Activated CD4-positive, alpha-beta memory T cell treated with anti-CD3 and anti-CD28 coated beads, Interleukin-2, amount 10 ng/mL, durations not matched to agents 7 days and 5 days (primary cell): ENCODE measurements at regions of chr1 and their contacts with region 1.

Region 1: GRCh38 chr1:207797229-207797961 is 45.5 kb downstream of the CD46 start:
- DNase-seq: peak; percentile 81
- H3K4me3 Mint-ChIP-seq: no peak overlapping the region
- H3K27ac Mint-ChIP-seq: no peak overlapping the region
- H3K4me1 Mint-ChIP-seq: peaks cover 39% of the 10 kb centered on the region
- H3K27me3 Mint-ChIP-seq: no peaks in the 10 kb centered on the region

Region 2: GRCh38 chr1:207579436-207579799 is 218.0 kb before region 1 on chr1:
- CTCF ChIA-PET with region 1: interaction called, 10 read pairs
- POLR2A ChIA-PET with region 1: no interaction called
- DNase-seq: peak; percentile 54
- H3K4me3 Mint-ChIP-seq: no peak overlapping the region
- H3K27ac Mint-ChIP-seq: no peak overlapping the region
- H3K4me1 Mint-ChIP-seq: peaks cover 7% of the 10 kb centered on the region
- H3K27me3 Mint-ChIP-seq: peaks cover 23% of the 10 kb centered on the region

Region 3: DNA sequence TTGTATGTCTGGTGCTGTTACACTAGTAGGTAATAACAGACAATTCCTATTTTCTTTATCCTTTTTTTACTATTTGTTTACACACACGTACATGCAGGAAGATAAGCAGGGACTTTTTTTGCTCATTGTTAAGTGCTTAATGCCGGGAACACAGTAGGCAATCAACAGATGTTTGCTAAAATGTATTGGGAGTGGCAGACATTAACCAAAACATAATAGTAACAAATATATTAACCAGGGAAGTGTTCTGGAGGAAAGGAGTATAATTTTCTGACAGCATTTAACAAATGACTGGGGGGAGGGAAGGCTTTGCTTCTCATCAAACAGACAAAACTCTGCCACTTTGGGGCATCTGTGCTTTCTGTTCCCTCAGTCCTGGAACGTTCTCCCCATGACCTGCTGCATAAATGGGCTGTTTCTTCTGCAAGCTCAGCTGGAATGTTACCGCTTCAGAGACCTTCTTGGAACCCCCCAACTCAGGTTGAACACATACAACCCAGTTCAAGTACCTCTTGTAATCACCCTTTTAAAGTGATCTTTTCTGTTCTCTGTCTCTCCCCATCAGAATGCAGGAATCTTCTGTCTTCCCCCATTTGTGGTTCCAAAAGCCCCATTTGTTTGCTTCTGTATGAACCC is 150.3 kb before region 1 on chr1:
- CTCF ChIA-PET with region 1: no interaction called
- POLR2A ChIA-PET with region 1: no interaction called
- DNase-seq: no peak
- H3K4me3 Mint-ChIP-seq: no peak overlapping the region
- H3K27ac Mint-ChIP-seq: no peak overlapping the region
- H3K4me1 Mint-ChIP-seq: peaks cover 7% of the 10 kb centered on the region
- H3K27me3 Mint-ChIP-seq: peaks cover 34% of the 10 kb centered on the region

Region 4: GRCh38 chr1:207698822-207699483 is 98.4 kb before region 1 on chr1:
- CTCF ChIA-PET with region 1: interaction called, 12 read pairs
- POLR2A ChIA-PET with region 1: no interaction called
- DNase-seq: peak; percentile 43
- H3K4me3 Mint-ChIP-seq: no peak overlapping the region
- H3K27ac Mint-ChIP-seq: no peak overlapping the region
- H3K4me1 Mint-ChIP-seq: no peaks in the 10 kb centered on the region
- H3K27me3 Mint-ChIP-seq: peaks cover 10% of the 10 kb centered on the region

Region 5: DNA sequence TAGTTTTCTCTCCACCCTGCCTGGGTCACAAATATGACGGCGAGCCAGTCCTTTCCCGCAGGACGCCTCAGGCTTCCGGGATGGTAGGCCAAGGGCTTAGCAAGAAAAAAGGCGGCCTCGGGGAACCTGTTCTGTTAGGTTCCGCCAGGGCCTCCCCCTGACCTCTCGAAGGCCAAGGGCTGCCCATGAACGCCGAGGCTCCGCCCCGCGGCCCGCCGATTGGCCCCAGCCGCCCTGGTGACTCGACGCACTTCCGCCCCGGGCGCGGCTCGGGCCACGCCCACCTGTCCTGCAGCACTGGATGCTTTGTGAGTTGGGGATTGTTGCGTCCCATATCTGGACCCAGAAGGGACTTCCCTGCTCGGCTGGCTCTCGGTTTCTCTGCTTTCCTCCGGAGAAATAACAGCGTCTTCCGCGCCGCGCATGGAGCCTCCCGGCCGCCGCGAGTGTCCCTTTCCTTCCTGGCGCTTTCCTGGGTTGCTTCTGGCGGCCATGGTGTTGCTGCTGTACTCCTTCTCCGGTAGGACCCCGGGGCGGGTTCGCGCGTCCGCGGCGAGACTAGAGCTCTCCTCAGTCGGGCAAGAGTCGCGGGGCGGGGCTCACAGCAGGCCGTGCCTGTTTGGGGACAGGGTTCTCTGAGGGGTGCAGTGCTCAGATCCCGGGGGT is 45.5 kb before region 1 on chr1 and contains the start of gene CD46:
- CTCF ChIA-PET with region 1: interaction called, 13 read pairs
- POLR2A ChIA-PET with region 1: interaction called, 4 read pairs
- DNase-seq: peak; percentile 96
- H3K4me3 Mint-ChIP-seq: peak within 1 kb of the TSS; percentile 100
- H3K27ac Mint-ChIP-seq: peak within 1 kb of the TSS; percentile 93
- H3K4me1 Mint-ChIP-seq: peaks cover 67% of the 10 kb centered on the region
- H3K27me3 Mint-ChIP-seq: no peaks in the 10 kb centered on the region
- total RNA-seq, gene CD46: 140 to 145 TPM

Region 6: GRCh38 chr1:207828485-207829158 is 31.2 kb after region 1 on chr1:
- CTCF ChIA-PET with region 1: interaction called, 19 read pairs
- POLR2A ChIA-PET with region 1: interaction called, 6 read pairs
- DNase-seq: peak; percentile 65
- H3K4me3 Mint-ChIP-seq: no peak overlapping the region
- H3K27ac Mint-ChIP-seq: peak overlapping the region; percentile 16
- H3K4me1 Mint-ChIP-seq: peaks cover 97% of the 10 kb centered on the region
- H3K27me3 Mint-ChIP-seq: no peaks in the 10 kb centered on the region

Region 7: GRCh38 chr1:207876131-207876530 is 78.7 kb after region 1 on chr1:
- CTCF ChIA-PET with region 1: interaction called, 14 read pairs
- POLR2A ChIA-PET with region 1: interaction called, 4 read pairs
- DNase-seq: no peak
- H3K4me3 Mint-ChIP-seq: no peak overlapping the region
- H3K27ac Mint-ChIP-seq: no peak overlapping the region
- H3K4me1 Mint-ChIP-seq: peaks cover 59% of the 10 kb centered on the region
- H3K27me3 Mint-ChIP-seq: no peaks in the 10 kb centered on the region

Region 8: DNA sequence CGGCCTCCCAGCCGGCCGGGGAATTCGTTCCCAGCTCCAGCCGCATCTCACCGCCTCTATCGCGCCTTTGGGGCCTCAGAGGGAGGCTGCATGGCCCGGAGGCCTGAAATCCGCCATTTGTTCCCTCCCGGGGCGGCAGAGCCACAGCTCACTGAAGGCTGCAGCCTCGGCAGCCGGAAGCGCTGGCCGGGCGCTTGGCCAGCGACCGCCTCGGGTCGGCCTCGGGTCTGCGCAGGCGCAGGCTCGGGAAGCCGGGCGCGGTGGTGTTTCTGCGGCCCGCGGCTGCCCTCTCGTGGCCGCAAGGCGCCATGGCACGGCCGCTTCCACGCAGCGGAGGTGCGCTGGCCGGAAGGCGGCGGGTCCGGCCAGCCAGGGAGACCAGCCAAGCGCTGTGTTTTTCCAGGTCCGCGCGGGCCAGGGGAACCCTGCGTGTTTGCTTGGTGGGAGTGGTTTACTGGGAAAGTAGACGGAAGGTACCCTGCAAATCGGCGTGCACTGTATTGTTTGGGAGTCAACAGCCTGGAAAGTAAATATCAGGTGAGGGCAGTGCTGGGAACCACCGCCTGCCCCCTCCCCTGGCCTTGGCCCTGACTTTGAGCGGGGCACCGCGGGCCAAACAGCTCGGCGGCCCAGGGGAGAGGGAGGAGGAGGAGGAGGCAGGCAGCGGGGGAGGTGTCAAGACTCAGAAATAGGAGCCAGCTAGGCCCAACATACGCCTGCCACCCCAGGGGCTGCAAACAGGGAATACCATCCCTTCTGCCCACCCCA is 166.2 kb after region 1 on chr1:
- CTCF ChIA-PET with region 1: interaction called, 40 read pairs
- POLR2A ChIA-PET with region 1: interaction called, 10 read pairs
- DNase-seq: peak; percentile 87
- H3K4me3 Mint-ChIP-seq: peak overlapping the region; percentile 74
- H3K27ac Mint-ChIP-seq: peak overlapping the region; percentile 36
- H3K4me1 Mint-ChIP-seq: peaks cover 9% of the 10 kb centered on the region
- H3K27me3 Mint-ChIP-seq: peaks cover 42% of the 10 kb centered on the region

Region 9: DNA sequence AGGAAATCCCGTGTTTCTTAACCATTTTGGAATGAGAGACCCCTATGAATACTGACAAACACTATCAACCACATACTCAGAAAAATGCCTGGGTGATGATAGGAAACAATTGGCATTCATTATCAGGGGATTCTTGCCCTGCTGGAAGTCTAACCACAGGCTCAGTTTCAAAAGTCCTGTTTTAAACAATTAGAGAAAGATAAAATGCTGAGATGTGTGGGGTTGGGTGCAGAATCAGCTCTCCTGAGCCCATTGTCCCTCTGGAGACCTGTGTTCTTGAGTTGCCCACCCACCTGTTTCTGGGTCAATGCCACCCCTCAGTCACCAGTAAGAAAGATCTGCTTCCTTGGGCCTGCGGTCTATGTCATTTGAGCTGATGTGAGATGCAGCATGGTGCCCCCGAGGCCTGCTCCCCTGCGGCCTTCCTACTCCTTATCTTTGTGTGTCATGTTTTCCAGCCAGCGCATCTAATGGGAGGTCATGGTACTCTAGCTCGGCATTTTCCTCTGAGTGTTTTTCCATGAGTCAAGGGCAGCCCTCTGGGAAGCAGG is 577.1 kb after region 1 on chr1:
- CTCF ChIA-PET with region 1: no interaction called
- POLR2A ChIA-PET with region 1: no interaction called
- DNase-seq: no peak
- H3K4me3 Mint-ChIP-seq: no peak overlapping the region
- H3K27ac Mint-ChIP-seq: no peak overlapping the region
- H3K4me1 Mint-ChIP-seq: no peaks in the 10 kb centered on the region
- H3K27me3 Mint-ChIP-seq: no peaks in the 10 kb centered on the region